Body of pancreas (tissue), 4 donors: ENCODE measurements at regions of chr10 and their contacts with region 1.

Region 1: GRCh38 chr10:13776861-13777311 is 190.1 kb downstream of the PRPF18 start:
- DNase-seq: no peak
- ATAC-seq: no peak
- H3K4me3 ChIP-seq: no peak overlapping the region
- H3K27ac ChIP-seq: no peak overlapping the region
- H3K4me1 ChIP-seq: no peaks in the 10 kb centered on the region
- H3K27me3 ChIP-seq: no peaks in the 10 kb centered on the region
- CTCF ChIP-seq: no peak
- POLR2A ChIP-seq: no peak

Region 2: DNA sequence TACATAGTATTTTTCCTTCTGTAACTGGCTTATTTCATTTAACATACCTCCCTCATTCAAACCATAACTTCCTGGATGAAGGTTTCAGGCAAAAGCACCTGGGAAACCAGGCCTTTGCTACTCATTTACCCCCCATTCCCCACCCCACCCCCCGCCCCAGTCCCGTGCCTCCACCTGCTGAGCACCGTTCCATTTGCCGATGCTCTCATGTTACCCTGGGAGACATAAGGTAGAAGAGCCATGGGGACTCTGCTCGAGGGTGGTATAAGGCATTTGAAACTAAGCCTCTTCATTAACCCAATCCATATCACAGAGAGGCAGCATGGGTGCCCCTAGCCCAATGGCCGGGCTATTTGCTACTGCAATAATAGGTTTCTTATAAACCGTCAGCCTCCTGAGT is 637.7 kb before region 1 on chr10:
- intact Hi-C with region 1: no loop called
- DNase-seq: no peak
- ATAC-seq: no peak
- H3K4me3 ChIP-seq: no peak overlapping the region
- H3K27ac ChIP-seq: no peak overlapping the region
- H3K4me1 ChIP-seq: no peaks in the 10 kb centered on the region
- H3K27me3 ChIP-seq: no peaks in the 10 kb centered on the region
- CTCF ChIP-seq: no peak
- POLR2A ChIP-seq: no peak

Region 3: DNA sequence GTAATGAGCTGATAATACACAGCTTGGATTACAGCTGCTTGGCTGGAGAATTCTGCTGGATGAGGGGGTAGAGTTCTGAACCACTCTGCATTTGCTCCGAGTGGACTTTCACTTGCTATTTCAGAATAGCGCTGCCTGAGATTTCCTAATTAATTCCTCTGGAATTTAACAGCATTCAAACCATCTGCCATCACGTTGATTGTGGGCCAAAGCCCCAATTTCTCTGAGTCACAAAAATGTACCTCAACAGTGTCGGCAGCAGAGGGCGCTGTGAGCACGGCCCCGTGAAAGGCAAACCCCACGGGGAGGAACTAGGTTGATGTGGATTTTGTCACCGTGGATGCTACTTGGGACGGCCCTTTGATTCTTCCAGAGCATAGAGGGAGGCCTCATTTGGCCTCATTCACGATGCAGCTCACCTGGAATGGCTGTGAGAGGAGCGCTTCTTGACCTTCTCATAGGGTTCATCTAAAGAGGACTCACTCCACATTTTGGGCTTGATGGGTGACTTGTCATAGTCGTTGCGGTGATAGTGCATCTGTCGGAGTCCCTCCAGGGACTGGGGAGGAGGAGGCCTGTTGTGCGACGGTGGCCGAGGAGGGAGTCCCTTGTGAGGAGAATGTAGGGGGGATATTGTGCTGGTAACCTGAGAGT is 116.9 kb before region 1 on chr10:
- intact Hi-C with region 1: loop called (anchors 2 kb)
- DNase-seq: peak; percentile 57 to 64 (median 61)
- ATAC-seq: peak; percentile 58
- H3K4me3 ChIP-seq: no peak overlapping the region
- H3K27ac ChIP-seq: peak overlapping the region in 2 of 4 donors; percentile 13 to 21
- H3K4me1 ChIP-seq: no peaks in the 10 kb centered on the region
- H3K27me3 ChIP-seq: no peaks in the 10 kb centered on the region
- CTCF ChIP-seq: peak; percentile 65 to 92 (median 88)
- POLR2A ChIP-seq: no peak

Region 4: DNA sequence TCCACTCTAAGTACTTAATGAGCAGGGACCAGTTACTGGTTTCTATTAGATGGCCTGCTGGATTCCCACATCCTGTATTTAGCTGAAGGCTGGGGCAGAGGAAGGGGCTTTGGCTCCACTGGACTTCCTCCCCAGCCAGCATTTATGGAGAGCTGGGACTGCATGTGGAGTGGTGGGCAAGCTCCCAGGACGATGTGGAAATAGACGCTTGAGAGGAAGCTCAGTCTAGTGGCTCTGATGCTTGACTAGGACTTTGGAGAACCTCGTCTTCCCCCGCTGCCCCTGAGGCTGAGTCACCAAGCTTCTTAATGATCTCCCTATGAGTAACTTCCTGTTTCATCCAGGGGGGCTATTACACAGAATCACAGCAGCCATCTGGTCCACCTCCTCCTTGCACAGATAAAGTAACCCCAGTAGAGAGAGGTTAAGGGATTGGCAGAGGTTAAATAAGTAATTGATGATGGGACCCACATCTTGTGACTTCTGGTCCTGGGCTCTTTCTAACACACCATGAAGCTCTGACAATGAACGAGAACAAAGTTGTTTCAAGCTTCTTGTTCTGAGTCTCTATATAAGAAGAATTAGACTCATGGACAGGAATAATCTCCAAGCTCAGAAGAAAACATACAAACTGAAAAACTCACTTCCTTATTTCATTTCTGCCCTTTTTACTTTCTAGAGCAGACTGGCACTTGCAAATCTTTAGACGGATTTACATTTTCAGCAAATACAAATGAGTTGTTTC is 63.9 kb before region 1 on chr10:
- intact Hi-C with region 1: loop called (anchors 10 kb)
- DNase-seq: peak; percentile 43 to 83 (median 53)
- ATAC-seq: peak; percentile 31
- H3K4me3 ChIP-seq: no peak overlapping the region
- H3K27ac ChIP-seq: peak overlapping the region in 2 of 4 donors; percentile 3 to 73
- H3K4me1 ChIP-seq: peaks cover 32% of the 10 kb centered on the region
- H3K27me3 ChIP-seq: no peaks in the 10 kb centered on the region
- CTCF ChIP-seq: no peak
- POLR2A ChIP-seq: no peak

Region 5: GRCh38 chr10:13839430-13839990 is 62.6 kb after region 1 on chr10:
- intact Hi-C with region 1: no loop called
- DNase-seq: no peak
- ATAC-seq: no peak
- H3K4me3 ChIP-seq: no peak overlapping the region
- H3K27ac ChIP-seq: no peak overlapping the region
- H3K4me1 ChIP-seq: peaks cover 11% of the 10 kb centered on the region
- H3K27me3 ChIP-seq: no peaks in the 10 kb centered on the region
- CTCF ChIP-seq: no peak
- POLR2A ChIP-seq: no peak

Region 6: DNA sequence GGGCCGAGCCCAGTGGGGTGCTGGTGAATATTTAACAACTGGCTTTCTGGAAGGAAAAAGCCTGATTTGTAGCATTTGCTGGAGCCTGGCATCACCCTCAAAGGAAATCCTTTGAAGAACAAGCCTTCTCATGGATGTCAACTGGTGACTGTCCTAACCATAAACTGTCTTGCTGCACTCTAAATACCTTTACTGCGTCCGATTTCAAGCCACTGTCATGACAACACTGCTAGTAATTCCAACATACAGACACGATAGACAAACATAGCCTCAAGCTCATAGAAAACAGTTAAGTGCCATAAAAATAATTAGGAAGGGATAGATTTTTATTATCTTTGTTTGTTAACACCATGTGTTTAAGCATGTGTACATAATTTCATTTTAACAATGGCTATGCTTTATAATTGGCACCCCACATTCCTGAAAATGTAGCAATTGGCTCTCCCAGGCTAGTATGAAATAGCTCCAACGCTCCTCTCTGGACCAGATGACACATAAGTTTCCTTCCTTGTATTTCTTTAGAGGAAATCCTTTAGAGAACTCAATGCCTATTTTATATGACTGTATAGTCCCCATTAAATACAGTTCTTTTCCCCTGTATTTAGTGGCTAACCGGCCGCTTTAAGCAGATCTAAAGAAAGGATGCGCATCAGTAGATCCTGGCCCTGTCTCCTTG is 83.2 kb after region 1 on chr10:
- intact Hi-C with region 1: no loop called
- DNase-seq: no peak
- ATAC-seq: no peak
- H3K4me3 ChIP-seq: no peak overlapping the region
- H3K27ac ChIP-seq: no peak overlapping the region
- H3K4me1 ChIP-seq: no peaks in the 10 kb centered on the region
- H3K27me3 ChIP-seq: no peaks in the 10 kb centered on the region
- CTCF ChIP-seq: no peak
- POLR2A ChIP-seq: no peak

Region 7: DNA sequence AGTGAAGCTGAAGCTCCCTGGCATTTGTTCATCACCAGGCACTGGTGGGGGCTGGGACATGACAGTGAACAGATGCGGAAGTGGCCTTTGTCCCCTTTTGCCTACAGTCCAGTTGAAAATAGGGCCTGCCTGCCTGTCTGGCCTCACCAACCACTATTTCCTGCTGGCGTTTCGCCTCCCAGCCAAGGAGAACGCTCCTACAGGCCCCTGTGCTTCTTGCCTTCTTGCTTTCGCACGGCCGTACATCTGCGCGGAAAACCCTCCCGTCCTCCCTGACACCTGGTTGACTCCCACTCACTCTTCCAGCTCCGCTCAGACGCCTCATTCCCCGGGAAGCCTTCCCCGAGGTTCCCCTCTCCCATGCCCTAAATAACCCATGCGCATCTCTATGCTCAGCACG is 127.2 kb after region 1 on chr10:
- intact Hi-C with region 1: no loop called
- DNase-seq: peak in 1 of 4 donors; percentile 52
- ATAC-seq: no peak
- H3K4me3 ChIP-seq: no peak overlapping the region
- H3K27ac ChIP-seq: no peak overlapping the region
- H3K4me1 ChIP-seq: no peaks in the 10 kb centered on the region
- H3K27me3 ChIP-seq: no peaks in the 10 kb centered on the region
- CTCF ChIP-seq: no peak
- POLR2A ChIP-seq: no peak